ENCODE measurements at regions of chr6 and their contacts with region 1.

Region 1: DNA sequence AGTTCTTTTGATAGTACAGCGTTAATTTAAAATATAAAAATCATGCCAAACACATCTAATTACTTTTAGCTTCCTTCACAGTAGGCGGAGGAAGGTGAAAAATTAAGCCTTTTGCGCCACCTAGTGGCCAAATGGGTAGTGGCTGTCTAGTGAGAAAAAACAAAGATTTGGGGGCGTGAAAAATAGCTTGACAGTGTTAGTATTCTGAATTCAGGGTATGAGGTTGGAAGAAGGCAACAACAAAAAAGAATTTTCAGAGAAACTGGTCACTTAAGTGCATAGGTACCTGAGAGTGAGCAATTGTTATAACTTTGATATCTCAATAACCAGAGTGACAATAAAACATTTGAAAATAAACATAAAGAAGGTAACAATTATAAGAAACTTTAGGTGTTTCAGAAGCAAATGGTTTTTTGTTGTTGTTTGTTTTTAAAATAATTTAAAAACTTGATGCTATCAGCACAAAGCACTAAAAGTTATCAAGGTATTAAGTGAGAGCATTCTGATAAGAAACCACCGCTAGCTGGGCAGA is 14.3 kb downstream of the PSMB9 start:
- DNase-seq: no peak
- H3K4me3 ChIP-seq: no peak overlapping the region
- H3K27ac ChIP-seq: no peak overlapping the region
- H3K27me3 ChIP-seq: peaks cover 20% of the 10 kb centered on the region
- CTCF ChIP-seq: peak; percentile 89

Region 2: GRCh38 chr6:32432050-32432450 is 436.3 kb before region 1 on chr6:
- CTCF ChIA-PET with region 1: interaction called, 16 read pairs
- POLR2A ChIA-PET with region 1: no interaction called
- DNase-seq: no peak
- H3K4me3 ChIP-seq: no peak overlapping the region
- H3K27ac ChIP-seq: no peak overlapping the region
- H3K27me3 ChIP-seq: no peaks in the 10 kb centered on the region
- CTCF ChIP-seq: peak; percentile 30

Region 3: GRCh38 chr6:32684246-32684645 is 184.1 kb before region 1 on chr6:
- CTCF ChIA-PET with region 1: no interaction called
- POLR2A ChIA-PET with region 1: no interaction called
- DNase-seq: no peak
- H3K4me3 ChIP-seq: no peak overlapping the region
- H3K27ac ChIP-seq: no peak overlapping the region
- H3K27me3 ChIP-seq: no peaks in the 10 kb centered on the region
- CTCF ChIP-seq: no peak

Region 4: DNA sequence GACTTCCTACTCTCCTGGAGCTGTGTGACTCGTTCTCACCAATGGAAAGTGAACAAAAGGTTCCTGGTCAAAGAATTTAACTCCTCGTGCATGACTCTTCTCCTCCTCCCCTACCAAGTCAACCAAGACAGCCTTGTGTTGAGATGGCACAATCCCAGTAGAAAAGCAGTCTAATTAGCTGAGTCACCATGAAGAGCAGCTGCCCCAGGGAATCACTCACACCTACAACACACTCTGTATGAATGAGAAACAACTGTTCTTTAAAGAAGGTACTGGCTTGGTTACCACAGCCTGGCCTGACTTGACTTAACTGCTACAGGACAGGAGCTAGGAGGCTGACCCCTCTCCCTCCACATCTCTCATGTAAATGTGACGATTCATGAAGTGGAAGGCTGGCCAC is 48.6 kb before region 1 on chr6:
- CTCF ChIA-PET with region 1: interaction called, 87 read pairs
- POLR2A ChIA-PET with region 1: no interaction called
- DNase-seq: no peak
- H3K4me3 ChIP-seq: no peak overlapping the region
- H3K27ac ChIP-seq: no peak overlapping the region
- H3K27me3 ChIP-seq: peaks cover 11% of the 10 kb centered on the region
- CTCF ChIP-seq: no peak

Region 5: DNA sequence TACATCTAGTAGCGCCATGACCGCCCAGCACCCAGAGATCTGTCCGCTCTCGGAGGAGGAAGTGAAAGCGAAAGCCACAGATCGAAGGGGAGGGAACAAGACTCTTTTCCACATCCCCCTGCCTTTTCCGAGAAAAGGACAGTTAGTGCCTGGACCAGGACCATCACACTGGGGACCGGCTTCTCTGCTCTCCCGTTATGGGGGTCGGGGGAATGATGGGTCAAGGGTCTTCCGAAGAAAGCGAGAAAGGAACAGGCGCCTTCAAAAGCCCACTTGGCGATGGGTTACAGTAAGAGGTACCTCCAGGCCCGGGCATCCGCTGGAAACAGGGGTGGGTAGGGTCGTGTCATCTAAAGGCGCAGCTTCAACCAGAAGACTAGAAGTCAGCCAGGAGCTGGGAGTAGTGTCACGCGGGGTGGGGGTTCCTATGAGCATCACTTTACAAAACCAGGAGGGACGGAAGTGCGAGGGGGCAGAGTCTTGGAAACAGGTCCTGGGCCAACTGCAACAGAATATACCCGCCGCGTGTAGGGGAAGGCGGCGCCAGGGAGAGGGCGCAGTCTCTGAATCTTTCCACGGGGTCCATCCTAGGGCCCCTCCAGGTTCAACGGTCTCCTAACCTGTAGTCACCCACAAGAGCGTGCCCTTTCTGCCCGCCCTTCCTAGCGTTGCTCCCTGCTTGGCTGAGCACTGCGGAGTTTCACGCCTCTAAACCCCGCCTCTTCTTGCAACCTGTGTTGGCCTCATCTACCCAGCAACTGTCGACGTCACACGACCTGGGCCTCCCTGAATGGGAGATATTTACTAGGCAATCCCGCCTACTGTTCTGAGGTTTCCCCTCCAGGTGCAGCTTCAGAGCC is 24.1 kb before region 1 on chr6 and contains the start of gene PSMB8:
- CTCF ChIA-PET with region 1: interaction called, 271 read pairs
- POLR2A ChIA-PET with region 1: no interaction called
- DNase-seq: peak; percentile 72
- H3K4me3 ChIP-seq: peak within 1 kb of the TSS; percentile 85
- H3K27ac ChIP-seq: peak within 1 kb of the TSS; percentile 73
- H3K27me3 ChIP-seq: no peaks in the 10 kb centered on the region
- CTCF ChIP-seq: peak; percentile 42
- polyA plus RNA-seq, gene PSMB8: 62.0 and 70.0 TPM in 2 replicates

Region 6: DNA sequence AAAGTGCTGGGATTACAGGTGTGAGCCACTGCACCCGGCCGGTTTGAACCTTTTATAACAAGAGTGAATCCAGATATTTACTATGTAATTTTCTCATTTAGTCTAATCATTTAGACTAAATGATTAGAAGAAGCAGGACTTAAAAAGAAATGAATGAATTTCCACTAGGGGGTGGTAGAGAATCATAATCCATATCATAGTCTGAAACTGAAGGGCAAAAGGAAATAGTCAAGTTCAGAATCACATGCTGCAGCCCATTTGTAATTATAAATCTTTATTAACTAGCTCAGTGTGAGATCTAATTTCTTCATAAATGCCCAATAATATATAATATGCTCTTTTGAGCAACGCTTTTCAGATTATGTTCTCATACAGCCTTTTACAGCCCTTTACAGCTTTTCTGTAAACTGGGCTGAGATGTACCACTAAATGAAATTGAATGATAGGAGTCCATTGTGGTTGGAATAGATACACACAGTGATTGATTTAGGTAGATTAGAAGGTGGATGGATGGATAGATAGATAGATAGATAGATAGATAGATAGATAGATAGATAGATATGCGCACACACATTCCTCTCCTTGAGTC is 17.5 kb after region 1 on chr6:
- CTCF ChIA-PET with region 1: interaction called, 59 read pairs
- POLR2A ChIA-PET with region 1: no interaction called
- DNase-seq: no peak
- H3K4me3 ChIP-seq: no peak overlapping the region
- H3K27ac ChIP-seq: no peak overlapping the region
- H3K27me3 ChIP-seq: peaks cover 2% of the 10 kb centered on the region
- CTCF ChIP-seq: peak; percentile 63

Region 7: GRCh38 chr6:32952817-32953739 is 84.8 kb after region 1 on chr6 and contains the start of gene HLA-DMA:
- CTCF ChIA-PET with region 1: interaction called, 23 read pairs
- POLR2A ChIA-PET with region 1: no interaction called
- DNase-seq: peak; percentile 80
- H3K4me3 ChIP-seq: peak within 1 kb of the TSS; percentile 29
- H3K27ac ChIP-seq: no peak within 1 kb of the TSS
- H3K27me3 ChIP-seq: no peaks in the 10 kb centered on the region
- CTCF ChIP-seq: peak; percentile 82
- polyA plus RNA-seq, gene HLA-DMA: 7.1 and 8.2 TPM in 2 replicates

Region 8: GRCh38 chr6:33375143-33375671 is 506.9 kb after region 1 on chr6:
- CTCF ChIA-PET with region 1: no interaction called
- POLR2A ChIA-PET with region 1: no interaction called
- DNase-seq: peak; percentile 59
- H3K4me3 ChIP-seq: no peak overlapping the region
- H3K27ac ChIP-seq: no peak overlapping the region
- H3K27me3 ChIP-seq: no peaks in the 10 kb centered on the region
- CTCF ChIP-seq: no peak

Measured in AG04450 (cell line).